Kidney (tissue), 22 donors: ENCODE measurements at regions of chr1 and their contacts with region 1.

Region 1: GRCh38 chr1:66253330-66253921 is 280.5 kb upstream of the SGIP1 start:
- DNase-seq: peak in 2 of 5 donors; percentile 70 to 78
- H3K4me3 ChIP-seq: no peak overlapping the region
- H3K27ac ChIP-seq: no peak overlapping the region
- H3K4me1 ChIP-seq: no peaks in the 10 kb centered on the region
- H3K27me3 ChIP-seq: no peaks in the 10 kb centered on the region
- CTCF ChIP-seq: peak; percentile 81

Region 2: GRCh38 chr1:66335859-66336640 is 82.6 kb after region 1 on chr1:
- intact Hi-C with region 1: no loop called
- DNase-seq: peak in 2 of 5 donors; percentile 57 to 75
- H3K4me3 ChIP-seq: peak overlapping the region in 1 of 3 donors; percentile 3
- H3K27ac ChIP-seq: peak overlapping the region; percentile 18 to 78
- H3K4me1 ChIP-seq: peaks cover 0 to 7% (median 0%) of the 10 kb centered on the region in 3 donors
- H3K27me3 ChIP-seq: no peaks in the 10 kb centered on the region
- CTCF ChIP-seq: no peak

Region 3: GRCh38 chr1:66413136-66413837 is 159.9 kb after region 1 on chr1:
- intact Hi-C with region 1: no loop called
- DNase-seq: no peak
- H3K4me3 ChIP-seq: no peak overlapping the region
- H3K27ac ChIP-seq: no peak overlapping the region
- H3K4me1 ChIP-seq: peaks cover 0 to 4% (median 0%) of the 10 kb centered on the region in 3 donors
- H3K27me3 ChIP-seq: no peaks in the 10 kb centered on the region
- CTCF ChIP-seq: no peak

Region 4: DNA sequence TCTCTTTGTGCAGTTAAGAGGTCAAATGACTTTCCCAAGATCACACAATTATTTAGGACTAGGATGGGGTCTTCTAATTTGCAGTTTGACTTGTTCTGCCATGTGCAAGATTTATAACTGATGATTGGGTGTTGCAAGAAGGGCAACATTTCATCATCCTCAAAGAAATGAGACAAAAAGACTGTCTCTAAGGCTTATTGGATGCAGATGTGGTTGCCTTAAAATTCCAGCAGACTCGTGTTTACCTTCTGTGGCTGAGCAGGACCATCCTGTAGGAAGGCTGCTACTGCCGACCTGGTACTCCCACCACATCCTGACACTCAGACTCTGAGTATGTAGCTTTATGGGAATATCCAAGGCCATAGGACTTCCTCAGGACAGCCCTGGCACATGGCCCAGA is 180.7 kb after region 1 on chr1:
- intact Hi-C with region 1: no loop called
- DNase-seq: no peak
- H3K4me3 ChIP-seq: no peak overlapping the region
- H3K27ac ChIP-seq: no peak overlapping the region
- H3K4me1 ChIP-seq: no peaks in the 10 kb centered on the region
- H3K27me3 ChIP-seq: no peaks in the 10 kb centered on the region
- CTCF ChIP-seq: no peak

Region 5: DNA sequence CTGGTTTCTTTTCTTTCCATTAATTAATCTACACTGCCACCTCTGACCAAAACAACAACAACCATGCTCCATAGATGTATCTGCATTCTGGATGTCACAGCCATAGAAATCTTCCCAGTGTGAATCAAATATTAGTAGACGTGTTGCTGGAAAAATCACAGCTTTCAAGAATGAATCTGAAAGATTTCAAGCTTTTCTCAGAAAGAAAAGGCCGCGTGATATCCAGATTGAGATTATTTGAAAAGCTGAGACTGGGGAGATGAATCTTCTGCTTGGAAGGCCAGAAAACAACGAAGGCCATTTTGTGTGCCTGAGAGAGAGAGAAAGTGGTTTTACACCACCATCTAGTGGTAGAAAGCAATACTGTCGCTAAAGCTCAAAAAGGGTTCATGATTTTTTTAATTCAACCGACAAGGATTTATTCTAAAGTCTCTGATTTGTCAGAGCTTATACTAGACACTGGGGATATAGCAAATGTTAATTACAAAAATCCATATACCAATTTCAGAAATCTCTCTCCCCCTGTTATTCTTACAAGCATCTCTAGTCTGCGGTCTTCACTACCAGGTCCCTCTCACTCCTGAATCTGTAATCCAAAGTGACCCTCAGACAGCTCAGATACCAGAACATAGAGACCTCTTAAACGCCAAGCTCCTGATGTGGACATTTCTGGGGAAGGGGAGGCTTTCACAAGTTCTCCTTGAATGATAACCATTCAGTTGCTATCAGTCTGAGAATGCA is 193.0 kb after region 1 on chr1:
- intact Hi-C with region 1: loop called (anchors 5 kb)
- DNase-seq: peak in 3 of 5 donors; percentile 19 to 87 (median 85)
- H3K4me3 ChIP-seq: no peak overlapping the region
- H3K27ac ChIP-seq: no peak overlapping the region
- H3K4me1 ChIP-seq: no peaks in the 10 kb centered on the region
- H3K27me3 ChIP-seq: no peaks in the 10 kb centered on the region
- CTCF ChIP-seq: peak; percentile 90